GM12878 (cell line): ENCODE measurements at regions of chr15 and their contacts with region 1.

Region 1: DNA sequence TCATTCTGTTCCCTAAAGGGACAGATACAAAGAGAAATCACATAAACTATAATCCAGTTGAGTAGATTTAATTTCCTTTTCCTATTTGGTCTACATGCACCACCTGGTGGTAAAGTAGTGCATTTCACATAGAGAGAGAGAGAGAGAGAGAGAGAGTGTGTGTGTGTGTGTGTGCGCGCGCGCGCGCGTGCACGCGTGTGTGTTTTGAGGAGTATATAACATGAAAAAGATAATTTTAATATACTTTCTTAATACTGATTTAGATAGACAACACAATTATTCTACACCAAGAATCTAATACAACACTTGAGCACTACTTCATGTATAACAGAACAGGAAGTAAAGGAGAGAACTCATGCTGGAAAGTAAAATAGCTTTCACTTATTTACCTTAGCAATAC is 1.1 kb upstream of the FGF7 start:
- DNase-seq: peak; percentile 12
- ATAC-seq: peak; percentile 72
- H3K4me3 ChIP-seq: no peak overlapping the region
- H3K27ac ChIP-seq: no peak overlapping the region
- H3K4me1 ChIP-seq: no peaks in the 10 kb centered on the region
- H3K27me3 ChIP-seq: no peaks in the 10 kb centered on the region
- CTCF ChIP-seq: peak; percentile 57 to 78 (median 66)
- EP300 ChIP-seq: no peak
- POLR2A ChIP-seq: no peak
- RAD21 ChIP-seq: peak; percentile 80

Region 2: DNA sequence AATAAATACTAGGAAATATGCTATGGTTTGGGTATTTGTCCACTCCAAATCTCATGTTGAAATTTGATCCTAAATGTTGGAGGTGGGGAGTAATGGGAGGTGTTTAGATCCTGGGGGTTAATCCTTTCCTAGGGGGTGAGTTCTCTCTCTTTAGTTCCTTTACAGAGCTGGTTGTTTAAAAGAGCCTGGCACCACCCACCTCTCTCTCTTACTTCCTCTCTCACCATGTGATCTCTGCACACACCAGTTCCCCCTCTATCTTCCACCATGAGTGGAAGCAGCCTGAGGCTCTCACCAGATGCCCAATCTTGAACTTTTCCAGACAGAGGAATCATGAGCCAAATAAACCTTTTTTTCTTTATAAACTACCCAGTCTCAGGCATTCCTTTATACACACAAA is 1290.7 kb before region 1 on chr15:
- CTCF ChIA-PET with region 1: no interaction called
- POLR2A ChIA-PET with region 1: no interaction called
- RAD21 ChIA-PET with region 1: no interaction called
- SMC1A ChIA-PET with region 1: no interaction called
- in situ Hi-C with region 1: no loop called
- intact Hi-C with region 1: no loop called
- DNase-seq: no peak
- ATAC-seq: no peak
- H3K4me3 ChIP-seq: no peak overlapping the region
- H3K27ac ChIP-seq: no peak overlapping the region
- H3K4me1 ChIP-seq: no peaks in the 10 kb centered on the region
- H3K27me3 ChIP-seq: no peaks in the 10 kb centered on the region
- CTCF ChIP-seq: no peak
- EP300 ChIP-seq: no peak
- POLR2A ChIP-seq: no peak
- RAD21 ChIP-seq: no peak

Region 3: GRCh38 chr15:48855501-48856440 is 566.2 kb before region 1 on chr15:
- CTCF ChIA-PET with region 1: interaction called, 47 read pairs
- POLR2A ChIA-PET with region 1: no interaction called
- RAD21 ChIA-PET with region 1: interaction called, 7 read pairs
- SMC1A ChIA-PET with region 1: interaction called, 49 read pairs
- in situ Hi-C with region 1: loop called (anchors 5 kb)
- intact Hi-C with region 1: no loop called
- DNase-seq: no peak
- ATAC-seq: no peak
- H3K4me3 ChIP-seq: no peak overlapping the region
- H3K27ac ChIP-seq: no peak overlapping the region
- H3K4me1 ChIP-seq: no peaks in the 10 kb centered on the region
- H3K27me3 ChIP-seq: no peaks in the 10 kb centered on the region
- CTCF ChIP-seq: peak in 1 of 3 experiments; percentile 25; a peak in 2 of 6 replicates
- EP300 ChIP-seq: no peak
- POLR2A ChIP-seq: no peak
- RAD21 ChIP-seq: 0 out of 2 replicates have a peak, but pooled peaks have one; percentile 10

Region 4: GRCh38 chr15:49225613-49226281 is 196.2 kb before region 1 on chr15:
- CTCF ChIA-PET with region 1: interaction called, 4 read pairs
- POLR2A ChIA-PET with region 1: no interaction called
- RAD21 ChIA-PET with region 1: no interaction called
- SMC1A ChIA-PET with region 1: no interaction called
- in situ Hi-C with region 1: loop called (anchors 5 kb)
- intact Hi-C with region 1: no loop called
- DNase-seq: no peak
- ATAC-seq: no peak; the same call in 2 of the 3 replicates
- H3K4me3 ChIP-seq: no peak overlapping the region
- H3K27ac ChIP-seq: no peak overlapping the region
- H3K4me1 ChIP-seq: no peaks in the 10 kb centered on the region
- H3K27me3 ChIP-seq: no peaks in the 10 kb centered on the region
- CTCF ChIP-seq: peak in 2 of 3 experiments; percentile 15 to 27; a peak in 3 of 6 replicates
- EP300 ChIP-seq: no peak
- POLR2A ChIP-seq: no peak
- RAD21 ChIP-seq: no peak

Region 5: GRCh38 chr15:49235446-49236124 is 186.4 kb before region 1 on chr15:
- CTCF ChIA-PET with region 1: interaction called, 128 read pairs
- POLR2A ChIA-PET with region 1: no interaction called
- RAD21 ChIA-PET with region 1: interaction called, 40 read pairs
- SMC1A ChIA-PET with region 1: interaction called, 84 read pairs
- in situ Hi-C with region 1: no loop called
- intact Hi-C with region 1: loop called (anchors 1 kb)
- DNase-seq: peak; percentile 56
- ATAC-seq: peak; percentile 95
- H3K4me3 ChIP-seq: no peak overlapping the region
- H3K27ac ChIP-seq: no peak overlapping the region
- H3K4me1 ChIP-seq: peaks cover 7% of the 10 kb centered on the region; the same call in 1 of the 2 replicates
- H3K27me3 ChIP-seq: no peaks in the 10 kb centered on the region
- CTCF ChIP-seq: peak; percentile 68 to 85 (median 82)
- EP300 ChIP-seq: no peak
- POLR2A ChIP-seq: no peak
- RAD21 ChIP-seq: peak; percentile 84

Region 6: DNA sequence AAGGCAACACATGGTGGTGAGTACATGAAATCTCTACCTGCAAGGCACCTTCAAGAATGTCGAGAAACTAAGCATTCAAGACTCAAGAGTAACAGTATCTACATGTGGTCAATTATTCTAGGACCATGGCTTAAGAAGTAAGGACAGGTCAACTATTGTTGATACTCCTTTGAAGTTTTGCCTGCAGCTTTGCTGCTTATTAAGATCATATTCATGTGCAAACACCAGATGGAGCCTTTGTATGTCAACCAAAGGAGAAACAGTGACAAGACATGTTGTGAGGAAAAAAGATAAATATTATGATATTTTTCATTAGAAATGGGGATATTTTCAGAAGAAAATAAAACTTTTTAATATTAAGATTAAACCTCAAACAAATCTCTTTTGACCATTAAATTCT is 51.2 kb before region 1 on chr15:
- CTCF ChIA-PET with region 1: interaction called, 13 read pairs
- POLR2A ChIA-PET with region 1: no interaction called
- RAD21 ChIA-PET with region 1: no interaction called
- SMC1A ChIA-PET with region 1: interaction called, 3 read pairs
- in situ Hi-C with region 1: no loop called
- intact Hi-C with region 1: no loop called
- DNase-seq: no peak
- ATAC-seq: no peak
- H3K4me3 ChIP-seq: no peak overlapping the region
- H3K27ac ChIP-seq: no peak overlapping the region
- H3K4me1 ChIP-seq: no peaks in the 10 kb centered on the region
- H3K27me3 ChIP-seq: no peaks in the 10 kb centered on the region
- CTCF ChIP-seq: peak in 1 of 3 experiments; percentile 2; a peak in 1 of 6 replicates
- EP300 ChIP-seq: no peak
- POLR2A ChIP-seq: no peak
- RAD21 ChIP-seq: peak; percentile 32

Region 7: DNA sequence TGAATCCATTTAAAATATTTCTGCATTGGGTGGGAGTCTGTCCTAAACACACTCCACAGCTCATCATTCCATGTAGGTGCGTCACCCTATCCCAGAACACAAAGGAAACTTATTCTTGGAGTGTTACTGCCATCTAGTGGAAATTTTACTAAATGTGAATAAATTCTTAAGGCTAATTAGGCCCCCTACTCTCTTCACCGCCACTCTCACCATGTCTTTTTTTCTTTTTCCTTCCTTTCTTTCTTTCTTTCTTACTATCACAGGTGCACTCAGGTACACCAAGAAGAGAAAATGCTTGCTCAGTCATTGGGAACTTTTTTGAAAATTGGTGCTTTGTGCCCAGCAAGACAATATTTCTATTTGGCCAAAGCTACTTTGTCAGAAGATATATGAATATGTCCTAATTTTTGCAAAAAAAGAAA is 723.5 kb after region 1 on chr15:
- CTCF ChIA-PET with region 1: interaction called, 17 read pairs
- POLR2A ChIA-PET with region 1: no interaction called
- RAD21 ChIA-PET with region 1: interaction called, 9 read pairs
- SMC1A ChIA-PET with region 1: interaction called, 3 read pairs
- in situ Hi-C with region 1: loop called (anchors 10 kb)
- intact Hi-C with region 1: no loop called
- DNase-seq: peak; percentile 16
- ATAC-seq: peak; percentile 75
- H3K4me3 ChIP-seq: no peak overlapping the region
- H3K27ac ChIP-seq: no peak overlapping the region
- H3K4me1 ChIP-seq: no peaks in the 10 kb centered on the region
- H3K27me3 ChIP-seq: no peaks in the 10 kb centered on the region; a peak in 1 of 4 replicates
- CTCF ChIP-seq: peak; percentile 25 to 47 (median 31); a peak in 4 of 6 replicates
- EP300 ChIP-seq: no peak
- POLR2A ChIP-seq: no peak
- RAD21 ChIP-seq: peak; percentile 66